Activated naive CD8-positive, alpha-beta T cell treated with anti-CD3 and anti-CD28 coated beads, Interleukin-2, amount 10 ng/mL, durations not matched to agents 7 days and 5 days (primary cell): ENCODE measurements at regions of chr5 and their contacts with region 1.

Region 1: DNA sequence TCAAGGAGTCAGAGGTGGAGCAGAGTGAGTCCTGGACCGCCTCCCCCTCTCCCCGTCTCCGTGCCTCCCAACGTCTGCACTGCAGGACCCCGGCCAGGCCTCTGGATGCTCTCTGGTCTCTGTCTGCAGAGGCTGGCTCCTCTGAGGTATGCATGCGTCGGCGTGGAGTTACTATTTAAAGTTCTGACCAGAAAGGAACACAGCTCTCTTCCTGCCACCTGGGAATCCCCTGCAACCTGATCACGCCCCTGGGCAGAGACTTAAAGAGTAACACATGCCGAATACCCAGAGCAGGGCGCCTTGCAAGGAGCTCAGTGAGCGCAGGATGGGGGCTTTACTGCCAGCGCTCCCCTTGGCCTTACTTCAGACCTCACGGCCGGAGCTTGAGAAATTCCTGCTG is 16.0 kb downstream of the ANXA6 start:
- DNase-seq: no peak
- ATAC-seq: peak; percentile 92
- H3K4me3 Mint-ChIP-seq: peak overlapping the region; percentile 77
- H3K27ac Mint-ChIP-seq: peak overlapping the region; percentile 84
- H3K4me1 Mint-ChIP-seq: peaks cover 83% of the 10 kb centered on the region
- H3K27me3 Mint-ChIP-seq: no peaks in the 10 kb centered on the region

Region 2: DNA sequence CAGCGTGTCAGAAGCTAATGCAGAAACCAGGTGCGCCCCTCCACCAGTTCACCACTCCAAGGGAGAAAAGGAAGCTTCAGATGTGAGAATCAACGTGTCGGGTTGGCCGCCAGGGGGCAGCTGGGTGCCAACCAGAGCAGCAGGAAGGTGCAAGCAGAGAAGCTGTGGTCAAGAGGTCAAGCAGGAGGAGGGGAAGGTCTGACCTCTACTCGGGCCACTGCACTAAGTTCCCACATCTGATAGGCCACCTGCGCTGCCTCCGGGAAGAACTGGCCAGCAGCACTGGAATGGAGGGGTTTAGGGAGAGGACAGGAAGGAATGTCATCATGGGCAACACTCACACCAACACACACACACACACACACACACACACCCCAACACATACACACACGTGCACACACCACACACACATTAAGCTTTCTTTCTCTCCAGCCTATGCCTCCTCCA is 15.3 kb before region 1 on chr5:
- POLR2A ChIA-PET with region 1: interaction called, 14 read pairs
- DNase-seq: peak; percentile 76
- ATAC-seq: peak; percentile 57
- H3K4me3 Mint-ChIP-seq: peak overlapping the region; percentile 30
- H3K27ac Mint-ChIP-seq: peak overlapping the region; percentile 92
- H3K4me1 Mint-ChIP-seq: peaks cover 41% of the 10 kb centered on the region
- H3K27me3 Mint-ChIP-seq: no peaks in the 10 kb centered on the region

Region 3: DNA sequence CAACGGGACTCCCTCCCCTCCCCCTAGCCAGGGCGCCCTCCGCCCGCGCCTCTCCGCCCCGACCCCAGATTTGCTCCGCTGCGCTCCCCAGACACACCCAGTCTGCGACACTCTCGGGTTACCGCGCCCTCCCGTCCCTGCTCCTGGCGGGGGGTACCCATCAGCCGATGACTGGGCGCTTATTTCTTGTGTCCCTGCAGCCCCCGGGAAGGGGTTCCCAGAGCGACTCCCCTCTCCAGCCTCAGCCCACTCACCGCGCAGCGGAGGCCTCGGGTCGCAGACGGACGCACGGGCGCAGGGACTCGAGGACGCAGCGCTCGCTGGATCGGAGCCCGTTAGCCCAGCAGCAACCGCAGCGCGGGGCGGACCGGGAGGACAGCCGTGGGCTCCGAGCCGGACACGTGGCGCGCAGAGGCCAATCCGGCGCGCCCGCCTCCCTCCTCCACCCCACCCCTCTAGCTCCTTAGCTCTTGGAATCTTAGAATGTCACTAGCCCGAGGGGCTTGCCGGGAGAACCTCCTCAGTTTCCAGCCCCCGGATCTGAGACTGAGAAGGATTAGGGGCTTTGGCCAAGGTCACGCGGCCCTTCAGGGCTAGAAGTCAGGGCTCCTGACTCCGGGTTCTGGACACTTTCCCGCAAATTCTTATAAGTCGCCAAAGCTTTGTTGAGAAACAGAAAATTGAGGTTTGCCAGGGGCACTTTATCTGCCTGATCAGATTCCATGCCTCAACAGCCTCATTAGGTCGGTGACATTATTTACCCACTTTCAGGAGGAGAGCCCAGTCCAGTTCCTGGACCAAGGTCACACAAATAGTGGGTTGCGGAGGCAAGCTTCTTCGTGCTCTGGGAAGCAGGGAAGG is 16.1 kb after region 1 on chr5 and contains the start of gene ANXA6:
- POLR2A ChIA-PET with region 1: interaction called, 36 read pairs
- DNase-seq: peak; percentile 80
- ATAC-seq: peak; percentile 66
- H3K4me3 Mint-ChIP-seq: peak within 1 kb of the TSS; percentile 97
- H3K27ac Mint-ChIP-seq: peak within 1 kb of the TSS; percentile 95
- H3K4me1 Mint-ChIP-seq: peaks cover 44% of the 10 kb centered on the region
- H3K27me3 Mint-ChIP-seq: peaks cover 2% of the 10 kb centered on the region
- total RNA-seq, gene ANXA6: 518 to 538 TPM